ENCODE measurements at regions of chr3 and their contacts with region 1.

Region 1: GRCh38 chr3:192816351-192816750 is 89.0 kb upstream of the FGF12 start:
- DNase-seq: no peak
- H3K4me3 ChIP-seq: no peak overlapping the region
- CTCF ChIP-seq: peak in 1 of 3 donors; percentile 57
- POLR2A ChIP-seq: no peak

Region 2: GRCh38 chr3:190877925-190878324 is 1938.4 kb before region 1 on chr3:
- intact Hi-C with region 1: no loop called
- DNase-seq: no peak
- H3K4me3 ChIP-seq: no peak overlapping the region
- CTCF ChIP-seq: no peak
- POLR2A ChIP-seq: no peak

Region 3: DNA sequence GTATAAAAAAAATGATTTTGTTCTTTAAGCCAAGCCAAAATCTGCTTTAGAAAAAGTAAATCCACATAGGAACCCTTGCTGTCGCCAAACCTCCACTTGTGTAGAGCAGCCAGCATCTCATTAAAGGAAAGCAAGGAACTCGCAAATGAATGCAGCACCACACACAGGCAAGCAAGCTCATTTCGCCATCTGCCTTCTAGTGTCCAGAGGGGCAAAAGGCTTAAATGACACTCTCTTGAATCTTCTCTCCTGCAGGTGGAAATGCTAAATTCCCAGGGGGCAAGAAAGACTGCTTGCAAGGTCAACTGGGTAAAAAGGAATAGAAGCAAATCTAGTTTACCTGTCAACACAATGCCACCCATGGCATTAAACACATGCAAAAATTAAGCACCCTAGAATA is 99.0 kb after region 1 on chr3:
- intact Hi-C with region 1: loop called (anchors 2 kb)
- DNase-seq: no peak
- H3K4me3 ChIP-seq: no peak overlapping the region
- CTCF ChIP-seq: no peak
- POLR2A ChIP-seq: no peak

Region 4: GRCh38 chr3:193040836-193041672 is 224.7 kb after region 1 on chr3:
- intact Hi-C with region 1: loop called (anchors 5 kb)
- DNase-seq: no peak
- H3K4me3 ChIP-seq: no peak overlapping the region
- CTCF ChIP-seq: no peak
- POLR2A ChIP-seq: no peak

Region 5: GRCh38 chr3:193564012-193564411 is 747.7 kb after region 1 on chr3:
- intact Hi-C with region 1: loop called (anchors 10 kb)
- DNase-seq: no peak
- H3K4me3 ChIP-seq: no peak overlapping the region
- CTCF ChIP-seq: no peak
- POLR2A ChIP-seq: no peak

Region 6: GRCh38 chr3:193805509-193805908 is 989.2 kb after region 1 on chr3:
- intact Hi-C with region 1: no loop called
- DNase-seq: peak; percentile 71 to 91
- H3K4me3 ChIP-seq: no peak overlapping the region
- CTCF ChIP-seq: no peak
- POLR2A ChIP-seq: no peak